Mammary epithelial cell (primary cell): ENCODE measurements at regions of chr6 and their contacts with region 1.

Region 1: GRCh38 chr6:103629613-103630012 is 1230.1 kb downstream of the HACE1 start:
- DNase-seq: no peak
- H3K4me3 ChIP-seq: no peak overlapping the region
- H3K27ac ChIP-seq: no peak overlapping the region
- H3K4me1 ChIP-seq: no peaks in the 10 kb centered on the region
- H3K27me3 ChIP-seq: no peaks in the 10 kb centered on the region
- CTCF ChIP-seq: no peak

Region 2: GRCh38 chr6:103578120-103578519 is 51.5 kb before region 1 on chr6:
- CTCF ChIA-PET with region 1: no interaction called
- dilution Hi-C with region 1: loop called (anchors 5 kb)
- in situ Hi-C with region 1: no loop called
- intact Hi-C with region 1: no loop called
- DNase-seq: no peak
- H3K4me3 ChIP-seq: no peak overlapping the region
- H3K27ac ChIP-seq: no peak overlapping the region
- H3K4me1 ChIP-seq: no peaks in the 10 kb centered on the region
- H3K27me3 ChIP-seq: no peaks in the 10 kb centered on the region
- CTCF ChIP-seq: no peak